Activated CD4-positive, alpha-beta memory T cell treated with anti-CD3 and anti-CD28 coated beads for 36 hours (primary cell): ENCODE measurements at regions of chr4 and their contacts with region 1.

Region 1: GRCh38 chr4:93791570-93792195 is 36.9 kb upstream of the ATOH1 start:
- DNase-seq: peak; percentile 48
- H3K4me3 Mint-ChIP-seq: no peak overlapping the region
- H3K27ac Mint-ChIP-seq: no peak overlapping the region
- H3K4me1 Mint-ChIP-seq: no peaks in the 10 kb centered on the region
- H3K27me3 Mint-ChIP-seq: no peaks in the 10 kb centered on the region

Region 2: DNA sequence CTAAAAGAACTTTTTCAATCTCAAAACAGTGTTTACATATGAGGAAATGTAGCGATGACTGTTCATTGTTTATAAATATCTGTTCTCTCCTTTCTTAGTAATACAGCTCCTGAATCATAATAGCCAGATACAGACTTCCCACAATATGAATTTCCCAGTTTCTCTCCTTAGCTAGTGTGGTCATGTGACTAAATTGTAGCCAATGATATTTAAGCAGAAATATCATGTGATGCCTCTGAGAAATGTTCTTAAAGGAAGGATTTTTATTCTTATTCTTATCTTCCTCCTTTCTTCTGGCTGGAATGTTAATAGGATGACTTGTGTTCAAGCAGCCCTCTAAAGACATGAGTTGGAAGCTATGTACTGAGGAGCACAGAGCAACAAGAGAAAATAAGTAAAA is 346.8 kb before region 1 on chr4:
- CTCF ChIA-PET with region 1: no interaction called
- POLR2A ChIA-PET with region 1: no interaction called
- intact Hi-C with region 1: no loop called
- DNase-seq: no peak
- H3K4me3 Mint-ChIP-seq: no peak overlapping the region
- H3K27ac Mint-ChIP-seq: no peak overlapping the region
- H3K4me1 Mint-ChIP-seq: no peaks in the 10 kb centered on the region
- H3K27me3 Mint-ChIP-seq: no peaks in the 10 kb centered on the region

Region 3: DNA sequence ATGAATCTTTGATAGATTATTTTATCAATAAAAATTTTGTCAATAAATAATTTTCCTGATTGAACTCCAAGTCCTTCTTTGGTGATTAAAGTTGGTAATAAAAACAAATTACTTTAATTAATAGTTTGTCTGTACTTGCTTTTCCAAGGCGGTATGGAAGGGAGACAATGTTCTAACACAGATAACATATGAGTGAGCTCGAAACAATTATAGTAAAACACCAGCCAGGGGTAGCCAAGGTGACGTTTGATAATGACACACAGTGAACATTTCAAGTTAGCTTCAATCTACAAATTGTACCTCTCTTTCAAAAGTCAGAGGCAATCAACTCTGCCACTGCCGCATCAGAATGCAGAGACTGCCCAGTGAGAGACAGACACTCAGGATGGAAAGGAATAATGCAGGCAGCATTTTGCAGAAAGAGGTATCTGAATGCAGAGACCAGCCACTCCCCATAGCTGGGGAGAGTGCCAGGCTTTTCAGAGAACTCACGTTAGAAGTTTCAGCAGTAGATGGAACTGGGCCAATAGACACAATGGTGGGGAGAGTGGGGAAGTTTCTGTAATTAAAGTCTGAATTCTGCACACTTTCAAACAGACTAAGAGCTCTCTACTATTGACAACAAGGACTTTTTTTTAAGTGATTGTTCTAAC is 18.8 kb after region 1 on chr4:
- CTCF ChIA-PET with region 1: no interaction called
- POLR2A ChIA-PET with region 1: no interaction called
- intact Hi-C with region 1: no loop called
- DNase-seq: no peak
- H3K4me3 Mint-ChIP-seq: no peak overlapping the region
- H3K27ac Mint-ChIP-seq: no peak overlapping the region
- H3K4me1 Mint-ChIP-seq: no peaks in the 10 kb centered on the region
- H3K27me3 Mint-ChIP-seq: no peaks in the 10 kb centered on the region

Region 4: GRCh38 chr4:94127707-94128328 is 336.1 kb after region 1 on chr4:
- CTCF ChIA-PET with region 1: no interaction called
- POLR2A ChIA-PET with region 1: no interaction called
- intact Hi-C with region 1: loop called (anchors 2 kb)
- DNase-seq: no peak
- H3K4me3 Mint-ChIP-seq: no peak overlapping the region
- H3K27ac Mint-ChIP-seq: no peak overlapping the region
- H3K4me1 Mint-ChIP-seq: no peaks in the 10 kb centered on the region
- H3K27me3 Mint-ChIP-seq: peaks cover 4% of the 10 kb centered on the region

Region 5: GRCh38 chr4:94256828-94257227 is 465.1 kb after region 1 on chr4:
- CTCF ChIA-PET with region 1: interaction called, 5 read pairs
- POLR2A ChIA-PET with region 1: no interaction called
- intact Hi-C with region 1: loop called (anchors 2 kb)
- DNase-seq: no peak
- H3K4me3 Mint-ChIP-seq: no peak overlapping the region
- H3K27ac Mint-ChIP-seq: no peak overlapping the region
- H3K4me1 Mint-ChIP-seq: peaks cover 4% of the 10 kb centered on the region
- H3K27me3 Mint-ChIP-seq: no peaks in the 10 kb centered on the region

Region 6: DNA sequence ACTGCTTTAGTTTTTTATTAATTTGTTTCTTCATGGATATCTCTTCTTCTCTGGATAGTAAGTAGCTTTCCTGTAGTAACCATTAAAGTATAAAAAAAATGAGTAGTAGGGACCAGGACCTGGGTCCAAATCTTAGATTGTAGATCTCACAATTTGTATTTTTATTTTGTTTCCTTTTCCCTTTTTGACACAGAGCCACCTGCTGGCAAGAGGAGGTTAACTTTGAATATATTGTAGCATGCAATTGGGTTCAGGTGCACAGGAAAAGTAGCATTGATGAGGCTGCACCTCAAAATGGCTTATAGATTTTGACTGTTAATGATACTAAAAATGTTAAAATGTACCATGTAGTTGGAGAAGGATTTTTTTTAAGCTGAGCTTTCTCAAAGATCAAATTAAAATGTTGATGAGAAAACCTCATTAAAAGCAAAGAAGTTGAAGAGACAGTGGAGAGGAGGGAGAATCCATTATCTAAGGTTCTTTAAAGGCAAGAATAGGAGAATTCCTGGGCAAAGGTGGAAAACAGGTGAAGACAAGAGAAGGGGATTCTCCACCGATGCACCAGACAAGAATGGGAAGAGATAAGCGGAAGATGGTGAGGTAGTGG is 599.2 kb after region 1 on chr4:
- CTCF ChIA-PET with region 1: no interaction called
- POLR2A ChIA-PET with region 1: no interaction called
- intact Hi-C with region 1: loop called (anchors 5 kb)
- DNase-seq: peak; percentile 12
- H3K4me3 Mint-ChIP-seq: no peak overlapping the region
- H3K27ac Mint-ChIP-seq: no peak overlapping the region
- H3K4me1 Mint-ChIP-seq: no peaks in the 10 kb centered on the region
- H3K27me3 Mint-ChIP-seq: peaks cover 6% of the 10 kb centered on the region

Region 7: DNA sequence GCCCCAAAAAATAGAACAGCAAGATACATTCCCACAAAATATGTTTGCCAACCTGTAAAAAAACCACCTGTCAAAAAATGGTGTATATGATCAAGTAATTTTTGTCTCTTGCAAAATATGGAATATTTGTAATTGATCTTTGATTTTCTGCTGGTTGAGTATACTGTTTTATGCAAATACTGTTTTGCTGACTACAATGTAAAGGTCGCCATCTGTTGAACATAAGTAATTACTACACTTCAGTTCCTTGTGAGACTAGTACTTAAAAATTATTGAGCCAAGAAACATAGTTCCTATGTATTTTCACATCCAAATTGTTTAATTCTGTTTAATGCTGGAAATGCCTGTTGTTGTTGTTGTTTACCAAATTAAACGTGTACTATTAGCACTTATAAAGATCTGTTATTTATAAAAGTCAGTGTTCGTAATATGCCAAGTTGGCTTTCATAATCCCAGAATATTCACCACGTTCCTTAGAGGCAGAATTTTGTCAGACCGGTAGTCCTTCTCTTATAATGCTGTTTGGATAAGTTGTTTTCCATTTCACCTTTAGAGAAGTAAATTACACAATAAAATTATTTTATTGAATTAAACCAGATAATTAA is 804.3 kb after region 1 on chr4:
- CTCF ChIA-PET with region 1: no interaction called
- POLR2A ChIA-PET with region 1: no interaction called
- intact Hi-C with region 1: loop called (anchors 5 kb)
- DNase-seq: no peak
- H3K4me3 Mint-ChIP-seq: no peak overlapping the region
- H3K27ac Mint-ChIP-seq: no peak overlapping the region
- H3K4me1 Mint-ChIP-seq: no peaks in the 10 kb centered on the region
- H3K27me3 Mint-ChIP-seq: no peaks in the 10 kb centered on the region